Caco-2 (cell line): ENCODE measurements at regions of chr20 and their contacts with region 1.

Region 1: DNA sequence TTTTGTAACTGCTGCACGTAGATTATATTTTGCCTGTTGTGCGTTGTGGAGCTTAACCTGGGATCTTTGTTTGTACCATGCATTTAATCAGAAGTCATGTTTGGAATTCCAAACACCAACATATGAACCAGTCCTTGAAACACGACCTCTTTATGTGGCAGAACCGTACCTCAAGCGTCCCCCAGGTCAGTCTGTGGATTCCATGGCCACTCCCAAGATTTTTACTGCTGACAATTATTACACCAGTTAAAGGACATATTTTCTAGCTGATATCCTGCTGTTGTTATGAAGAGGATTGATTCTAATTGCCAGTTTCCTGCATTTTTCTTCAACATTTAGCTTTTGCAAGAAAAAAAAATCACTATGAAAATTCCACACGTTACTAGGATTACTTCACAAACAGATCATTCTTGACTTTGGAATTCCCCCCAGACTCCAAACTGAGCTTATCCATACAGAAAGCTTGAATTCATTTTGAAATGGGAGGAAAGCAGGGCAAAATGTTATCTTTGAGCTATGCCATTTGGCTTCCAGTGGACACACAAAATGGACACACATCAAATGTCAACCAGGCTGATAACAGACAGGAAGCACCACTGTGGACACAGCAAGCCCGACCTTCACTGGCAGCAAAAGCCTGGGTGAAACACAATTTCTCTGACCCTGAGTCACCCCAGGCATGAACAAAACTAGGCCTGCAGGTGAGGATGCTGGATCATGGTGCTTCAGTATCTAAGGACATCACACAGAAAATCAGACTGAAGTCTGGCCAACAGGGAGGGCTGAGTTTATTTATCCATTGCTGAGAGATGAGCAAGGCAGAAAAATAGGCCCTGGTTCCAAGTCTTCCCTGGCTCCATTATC is 542.9 kb upstream of the JAG1 start:
- DNase-seq: peak; percentile 58 to 86
- H3K4me3 ChIP-seq: no peak overlapping the region
- H3K4me3 Mint-ChIP-seq: peak overlapping the region; percentile 36
- H3K27ac Mint-ChIP-seq: peak overlapping the region; percentile 74
- H3K4me1 ChIP-seq: peaks cover 53% of the 10 kb centered on the region
- H3K4me1 Mint-ChIP-seq: peaks cover 38% of the 10 kb centered on the region
- H3K27me3 ChIP-seq: no peaks in the 10 kb centered on the region
- H3K27me3 Mint-ChIP-seq: no peaks in the 10 kb centered on the region
- CTCF ChIP-seq: no peak

Region 2: DNA sequence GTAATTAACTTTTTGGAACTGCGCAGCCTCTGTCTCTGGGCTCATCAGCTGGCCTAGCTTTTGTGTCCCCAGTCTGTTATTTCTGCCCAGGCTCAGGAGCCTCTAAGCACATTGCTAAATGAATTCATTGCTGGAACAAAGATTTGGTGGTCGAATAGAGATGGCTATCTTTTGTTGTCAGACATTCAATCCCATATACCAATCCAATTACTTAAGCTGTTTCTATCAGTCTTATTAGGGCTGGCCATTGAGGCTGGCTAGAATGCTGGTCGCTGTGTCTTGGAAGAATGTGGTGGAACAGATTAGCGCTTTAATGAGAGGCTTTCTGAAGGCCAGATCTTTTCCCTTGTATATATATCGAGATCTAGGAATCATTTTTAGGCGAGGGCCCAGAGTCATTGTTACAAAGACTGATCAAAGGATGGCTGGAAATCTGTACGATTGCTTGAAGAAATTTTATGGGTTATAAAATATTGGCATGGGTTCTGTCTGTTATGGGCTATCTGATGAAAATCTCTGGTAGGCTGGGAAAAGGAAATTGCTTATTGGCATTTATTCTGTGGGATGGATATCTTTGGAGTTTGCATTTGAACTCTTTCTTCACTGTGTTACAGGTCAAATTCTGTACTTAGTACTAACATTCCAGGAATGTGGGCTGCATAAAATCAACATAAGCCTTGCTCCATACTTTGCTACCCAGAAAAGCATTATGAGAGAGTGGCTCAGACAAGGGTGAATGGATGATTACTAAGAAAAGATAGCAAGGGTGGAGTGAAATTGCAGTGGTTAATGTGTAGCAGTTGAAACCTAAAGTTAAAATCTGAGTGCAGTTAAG is 508.1 kb before region 1 on chr20:
- CTCF ChIA-PET with region 1: no interaction called
- POLR2A ChIA-PET with region 1: no interaction called
- intact Hi-C with region 1: loop called (anchors 2 kb)
- DNase-seq: peak in 1 of 2 experiments; percentile 55
- H3K4me3 ChIP-seq: no peak overlapping the region
- H3K4me3 Mint-ChIP-seq: peak overlapping the region; percentile 31
- H3K27ac Mint-ChIP-seq: peak overlapping the region; percentile 58
- H3K4me1 ChIP-seq: peaks cover 42% of the 10 kb centered on the region
- H3K4me1 Mint-ChIP-seq: peaks cover 30% of the 10 kb centered on the region
- H3K27me3 ChIP-seq: no peaks in the 10 kb centered on the region
- H3K27me3 Mint-ChIP-seq: no peaks in the 10 kb centered on the region
- CTCF ChIP-seq: no peak

Region 3: GRCh38 chr20:11047559-11047958 is 169.1 kb before region 1 on chr20:
- CTCF ChIA-PET with region 1: no interaction called
- POLR2A ChIA-PET with region 1: interaction called, 4 read pairs
- intact Hi-C with region 1: loop called (anchors 1 kb)
- DNase-seq: peak; percentile 41 to 74
- H3K4me3 ChIP-seq: no peak overlapping the region
- H3K4me3 Mint-ChIP-seq: no peak overlapping the region
- H3K27ac Mint-ChIP-seq: no peak overlapping the region
- H3K4me1 ChIP-seq: peaks cover 50% of the 10 kb centered on the region
- H3K4me1 Mint-ChIP-seq: peaks cover 23% of the 10 kb centered on the region
- H3K27me3 ChIP-seq: no peaks in the 10 kb centered on the region
- H3K27me3 Mint-ChIP-seq: no peaks in the 10 kb centered on the region
- CTCF ChIP-seq: no peak

Region 4: GRCh38 chr20:11229772-11230171 is 13.1 kb after region 1 on chr20:
- CTCF ChIA-PET with region 1: no interaction called
- POLR2A ChIA-PET with region 1: no interaction called
- intact Hi-C with region 1: loop called (anchors 1 kb)
- DNase-seq: peak; percentile 69 to 73
- H3K4me3 ChIP-seq: no peak overlapping the region
- H3K4me3 Mint-ChIP-seq: no peak overlapping the region
- H3K27ac Mint-ChIP-seq: peak overlapping the region; percentile 40
- H3K4me1 ChIP-seq: peaks cover 12% of the 10 kb centered on the region
- H3K4me1 Mint-ChIP-seq: peaks cover 7% of the 10 kb centered on the region
- H3K27me3 ChIP-seq: no peaks in the 10 kb centered on the region
- H3K27me3 Mint-ChIP-seq: no peaks in the 10 kb centered on the region
- CTCF ChIP-seq: no peak

Region 5: GRCh38 chr20:11454966-11455799 is 238.5 kb after region 1 on chr20:
- CTCF ChIA-PET with region 1: no interaction called
- POLR2A ChIA-PET with region 1: no interaction called
- intact Hi-C with region 1: loop called (anchors 1 kb)
- DNase-seq: peak; percentile 82 to 92
- H3K4me3 ChIP-seq: peak overlapping the region; percentile 23
- H3K4me3 Mint-ChIP-seq: peak overlapping the region; percentile 73
- H3K27ac Mint-ChIP-seq: peak overlapping the region; percentile 92
- H3K4me1 ChIP-seq: peaks cover 69% of the 10 kb centered on the region
- H3K4me1 Mint-ChIP-seq: peaks cover 63% of the 10 kb centered on the region
- H3K27me3 ChIP-seq: no peaks in the 10 kb centered on the region
- H3K27me3 Mint-ChIP-seq: no peaks in the 10 kb centered on the region
- CTCF ChIP-seq: no peak